ENCODE measurements at regions of chr12 and their contacts with region 1.

Region 1: DNA sequence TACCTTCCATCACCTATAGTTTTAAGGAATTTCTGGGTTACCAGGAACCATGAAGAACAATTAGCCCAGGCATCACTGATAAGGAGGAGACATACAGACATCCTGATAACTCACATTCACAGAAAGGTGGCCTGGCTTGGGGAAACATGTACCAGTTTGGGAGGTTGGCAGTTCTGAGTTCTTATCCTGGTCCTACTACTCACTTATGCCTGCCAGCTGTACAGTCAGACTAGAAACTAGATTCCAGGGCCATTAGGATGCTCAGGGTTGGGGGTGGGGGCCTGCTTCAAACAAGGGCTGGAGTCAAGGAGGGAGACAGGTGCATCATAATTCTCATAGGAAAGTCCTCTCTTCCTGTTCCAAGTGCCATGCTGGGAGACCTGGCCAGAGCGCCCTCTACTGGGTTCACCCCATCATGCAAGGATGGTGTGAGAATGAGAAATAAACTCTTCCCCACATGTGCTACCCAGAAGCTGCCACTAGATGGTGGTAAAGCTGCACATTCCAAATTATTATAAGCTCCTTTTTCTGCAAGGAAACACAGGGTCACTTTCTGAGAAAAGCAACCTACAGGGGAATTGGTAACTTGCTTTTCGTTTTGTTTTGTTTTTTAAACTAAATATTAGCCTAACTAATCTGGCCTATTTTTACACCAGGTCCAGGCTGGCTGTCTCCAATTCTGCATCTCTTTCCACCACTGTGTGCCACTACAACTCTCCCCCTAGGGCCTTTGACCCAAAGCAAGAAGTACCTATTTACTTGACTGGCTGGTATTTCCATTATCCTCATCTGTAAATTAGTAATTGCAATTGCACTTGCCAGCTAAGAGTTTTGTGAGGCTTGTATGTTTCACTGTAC is 14.5 kb downstream of the OAS2 start:
- DNase-seq: peak; percentile 84
- H3K4me3 Mint-ChIP-seq: no peak overlapping the region
- H3K27ac Mint-ChIP-seq: no peak overlapping the region
- H3K4me1 Mint-ChIP-seq: peaks cover 31% of the 10 kb centered on the region
- H3K27me3 Mint-ChIP-seq: no peaks in the 10 kb centered on the region

Region 2: GRCh38 chr12:112725391-112725790 is 267.4 kb before region 1 on chr12:
- CTCF ChIA-PET with region 1: no interaction called
- POLR2A ChIA-PET with region 1: no interaction called
- intact Hi-C with region 1: no loop called
- DNase-seq: no peak
- H3K4me3 Mint-ChIP-seq: no peak overlapping the region
- H3K27ac Mint-ChIP-seq: no peak overlapping the region
- H3K4me1 Mint-ChIP-seq: no peaks in the 10 kb centered on the region
- H3K27me3 Mint-ChIP-seq: peaks cover 6% of the 10 kb centered on the region

Region 3: DNA sequence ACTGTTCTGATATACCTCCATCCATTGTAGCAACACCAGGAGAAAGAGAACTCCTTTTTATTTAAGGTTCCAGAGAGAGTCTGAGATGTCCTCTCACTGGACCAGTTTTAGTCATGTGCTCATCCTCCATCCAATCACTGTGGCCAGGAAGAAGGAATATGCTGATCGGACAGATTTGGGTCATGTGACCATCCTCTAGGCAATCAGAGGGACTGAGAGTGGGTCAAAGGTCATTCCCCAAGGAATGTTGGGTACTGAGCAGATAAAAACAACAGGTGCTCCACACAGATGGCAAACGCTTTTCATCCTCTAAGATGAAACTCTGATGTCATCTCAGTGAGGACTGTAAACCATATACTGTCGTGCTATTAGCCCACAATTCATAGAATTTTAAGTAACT is 230.0 kb before region 1 on chr12:
- CTCF ChIA-PET with region 1: no interaction called
- POLR2A ChIA-PET with region 1: no interaction called
- intact Hi-C with region 1: no loop called
- DNase-seq: no peak
- H3K4me3 Mint-ChIP-seq: no peak overlapping the region
- H3K27ac Mint-ChIP-seq: no peak overlapping the region
- H3K4me1 Mint-ChIP-seq: no peaks in the 10 kb centered on the region
- H3K27me3 Mint-ChIP-seq: peaks cover 4% of the 10 kb centered on the region

Region 4: GRCh38 chr12:112900299-112901145 is 92.2 kb before region 1 on chr12:
- CTCF ChIA-PET with region 1: interaction called, 55 read pairs
- POLR2A ChIA-PET with region 1: no interaction called
- intact Hi-C with region 1: loop called (anchors 2 kb)
- DNase-seq: peak; percentile 56
- H3K4me3 Mint-ChIP-seq: no peak overlapping the region
- H3K27ac Mint-ChIP-seq: no peak overlapping the region
- H3K4me1 Mint-ChIP-seq: peaks cover 17% of the 10 kb centered on the region
- H3K27me3 Mint-ChIP-seq: peaks cover 1% of the 10 kb centered on the region

Region 5: DNA sequence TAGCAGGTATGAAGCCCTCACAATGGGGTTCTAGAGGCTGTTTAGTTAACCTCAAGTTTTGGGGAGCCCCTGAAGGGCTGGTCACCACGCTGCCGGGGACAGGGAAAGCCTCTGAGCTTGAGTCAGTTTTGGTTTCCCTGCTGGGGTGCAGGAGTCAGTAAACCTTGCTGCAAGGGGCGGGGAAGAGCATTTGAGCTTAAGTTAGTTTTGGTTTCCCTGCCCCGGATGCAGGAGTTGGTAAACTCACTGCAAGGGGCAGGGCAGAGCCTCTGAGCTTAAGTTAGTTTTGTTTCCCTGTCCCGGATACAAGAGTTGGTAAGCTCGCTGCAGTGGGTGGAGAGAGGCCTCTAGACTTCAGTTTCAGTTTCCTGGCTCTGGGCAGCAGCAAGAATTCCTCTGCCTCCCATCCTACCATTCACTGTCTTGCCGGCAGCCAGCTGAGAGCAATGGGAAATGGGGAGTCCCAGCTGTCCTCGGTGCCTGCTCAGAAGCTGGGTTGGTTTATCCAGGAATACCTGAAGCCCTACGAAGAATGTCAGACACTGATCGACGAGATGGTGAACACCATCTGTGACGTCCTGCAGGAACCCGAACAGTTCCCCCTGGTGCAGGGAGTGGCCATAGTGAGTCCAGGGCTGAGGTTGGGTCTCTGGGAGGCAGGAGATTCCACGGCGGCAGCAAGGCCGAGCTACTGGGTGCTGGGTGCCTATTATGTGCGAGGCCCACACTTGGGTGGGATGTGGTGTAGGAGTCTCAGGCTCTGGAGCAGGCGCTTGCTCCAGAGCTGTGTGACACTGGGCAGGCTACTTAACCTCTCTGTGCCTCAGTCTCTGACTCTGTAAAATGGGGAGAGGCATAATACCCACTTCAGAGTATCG is 14.4 kb before region 1 on chr12 and contains the start of gene OAS2:
- CTCF ChIA-PET with region 1: interaction called, 162 read pairs
- POLR2A ChIA-PET with region 1: interaction called, 43 read pairs
- intact Hi-C with region 1: loop called (anchors 1 kb)
- DNase-seq: peak; percentile 91
- H3K4me3 Mint-ChIP-seq: peak within 1 kb of the TSS; percentile 81
- H3K27ac Mint-ChIP-seq: peak within 1 kb of the TSS; percentile 100
- H3K4me1 Mint-ChIP-seq: peaks cover 24% of the 10 kb centered on the region
- H3K27me3 Mint-ChIP-seq: no peaks in the 10 kb centered on the region
- total RNA-seq, gene OAS2: 140 to 148 TPM

Region 6: GRCh38 chr12:113030875-113031525 is 38.2 kb after region 1 on chr12:
- CTCF ChIA-PET with region 1: interaction called, 25 read pairs
- POLR2A ChIA-PET with region 1: no interaction called
- intact Hi-C with region 1: loop called (anchors 2 kb)
- DNase-seq: no peak
- H3K4me3 Mint-ChIP-seq: no peak overlapping the region
- H3K27ac Mint-ChIP-seq: no peak overlapping the region
- H3K4me1 Mint-ChIP-seq: no peaks in the 10 kb centered on the region
- H3K27me3 Mint-ChIP-seq: peaks cover 2% of the 10 kb centered on the region

Region 7: DNA sequence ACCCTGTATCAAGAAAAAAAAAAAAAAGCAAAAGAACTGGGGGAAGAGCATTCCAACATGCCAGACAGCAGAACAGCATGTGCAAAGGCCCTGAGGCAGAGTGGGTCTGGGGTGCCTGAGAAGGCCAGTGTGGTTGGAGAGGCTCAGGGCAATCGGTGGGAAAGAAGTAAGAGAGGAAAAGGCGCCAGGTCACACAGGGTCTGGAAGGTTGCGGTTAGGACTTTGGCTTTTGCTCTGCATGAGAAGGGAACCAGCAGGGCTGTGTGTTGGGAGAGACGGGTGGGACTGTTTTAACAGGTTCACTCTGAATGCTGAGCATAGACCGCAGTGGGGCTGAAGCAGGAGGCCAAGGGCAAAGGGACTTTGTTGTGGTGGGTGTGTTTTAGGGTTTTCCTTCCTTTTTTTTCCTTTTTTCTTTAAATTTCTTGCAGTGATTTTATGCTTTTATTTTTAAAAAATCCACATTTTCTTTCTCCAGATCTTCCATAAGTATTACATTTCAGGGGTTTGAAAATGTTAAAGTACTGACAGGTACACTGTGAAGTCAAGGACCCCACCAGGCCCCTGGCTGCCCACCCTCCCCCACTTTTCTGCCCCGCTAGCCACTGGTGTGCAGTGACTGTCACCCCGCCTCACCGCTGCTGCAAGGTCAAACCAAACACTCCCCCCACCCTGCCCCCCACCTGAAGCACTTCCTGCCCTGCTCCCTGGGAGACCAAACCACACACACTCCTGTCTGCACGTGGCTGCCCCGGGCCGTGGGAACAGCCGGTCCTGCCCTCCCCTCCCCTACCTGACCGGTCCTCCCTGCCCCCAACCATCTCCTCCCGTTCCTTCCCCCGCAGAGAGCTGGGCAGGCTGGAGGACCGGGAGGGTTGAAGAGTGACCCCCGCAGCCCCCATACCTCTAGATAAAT is 93.7 kb after region 1 on chr12:
- CTCF ChIA-PET with region 1: interaction called, 11 read pairs
- POLR2A ChIA-PET with region 1: no interaction called
- intact Hi-C with region 1: no loop called
- DNase-seq: peak; percentile 57
- H3K4me3 Mint-ChIP-seq: peak overlapping the region; percentile 21
- H3K27ac Mint-ChIP-seq: peak overlapping the region; percentile 69
- H3K4me1 Mint-ChIP-seq: peaks cover 55% of the 10 kb centered on the region
- H3K27me3 Mint-ChIP-seq: no peaks in the 10 kb centered on the region

Region 8: DNA sequence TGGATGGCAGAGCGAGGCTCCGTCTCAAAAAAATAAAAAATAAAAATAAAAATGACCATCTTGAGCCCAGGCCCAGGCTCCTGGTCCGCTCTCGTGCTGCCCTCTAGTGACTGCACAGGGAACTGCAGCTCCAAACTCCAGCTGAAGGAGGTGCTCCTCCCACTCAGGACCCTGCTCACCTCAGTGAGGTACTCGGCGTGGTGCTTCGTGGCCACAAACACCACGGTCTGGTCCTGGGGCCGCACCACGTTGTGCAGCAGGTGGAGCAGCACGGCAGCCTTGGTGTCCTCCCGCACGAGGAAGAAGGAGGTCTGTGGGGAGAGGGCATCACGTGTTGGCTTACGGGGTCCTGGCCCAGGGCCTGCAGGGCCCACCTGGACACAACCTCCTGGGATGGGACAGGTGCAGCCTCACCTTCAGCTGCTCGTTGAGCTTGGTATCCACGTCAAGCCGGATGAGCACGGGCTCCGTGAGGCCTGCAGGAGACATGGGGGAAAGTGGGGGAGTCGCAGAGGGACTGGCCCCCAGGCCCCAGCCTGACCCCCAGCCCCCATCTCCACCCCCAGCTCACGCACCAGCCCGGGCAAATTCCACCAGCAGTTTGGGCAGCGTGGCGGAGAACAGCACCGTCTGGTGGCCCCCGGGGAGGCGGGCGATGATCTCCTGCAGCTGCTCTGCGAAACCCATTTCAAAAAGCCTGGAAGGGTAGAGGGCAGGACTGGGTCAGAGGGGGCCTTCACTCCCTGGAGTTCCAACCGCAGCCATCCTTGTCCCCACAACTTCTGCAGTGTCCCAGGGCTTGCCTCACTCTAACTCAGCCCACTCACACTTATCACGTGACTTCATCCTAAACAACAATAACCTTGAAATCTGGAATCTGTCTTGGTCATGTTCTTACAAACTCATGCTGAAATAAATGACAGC is 182.0 kb after region 1 on chr12:
- CTCF ChIA-PET with region 1: interaction called, 35 read pairs
- POLR2A ChIA-PET with region 1: no interaction called
- intact Hi-C with region 1: no loop called
- DNase-seq: peak; percentile 84
- H3K4me3 Mint-ChIP-seq: no peak overlapping the region
- H3K27ac Mint-ChIP-seq: no peak overlapping the region
- H3K4me1 Mint-ChIP-seq: peaks cover 2% of the 10 kb centered on the region
- H3K27me3 Mint-ChIP-seq: no peaks in the 10 kb centered on the region